ENCODE measurements at regions of chr12 and their contacts with region 1.

Region 1: DNA sequence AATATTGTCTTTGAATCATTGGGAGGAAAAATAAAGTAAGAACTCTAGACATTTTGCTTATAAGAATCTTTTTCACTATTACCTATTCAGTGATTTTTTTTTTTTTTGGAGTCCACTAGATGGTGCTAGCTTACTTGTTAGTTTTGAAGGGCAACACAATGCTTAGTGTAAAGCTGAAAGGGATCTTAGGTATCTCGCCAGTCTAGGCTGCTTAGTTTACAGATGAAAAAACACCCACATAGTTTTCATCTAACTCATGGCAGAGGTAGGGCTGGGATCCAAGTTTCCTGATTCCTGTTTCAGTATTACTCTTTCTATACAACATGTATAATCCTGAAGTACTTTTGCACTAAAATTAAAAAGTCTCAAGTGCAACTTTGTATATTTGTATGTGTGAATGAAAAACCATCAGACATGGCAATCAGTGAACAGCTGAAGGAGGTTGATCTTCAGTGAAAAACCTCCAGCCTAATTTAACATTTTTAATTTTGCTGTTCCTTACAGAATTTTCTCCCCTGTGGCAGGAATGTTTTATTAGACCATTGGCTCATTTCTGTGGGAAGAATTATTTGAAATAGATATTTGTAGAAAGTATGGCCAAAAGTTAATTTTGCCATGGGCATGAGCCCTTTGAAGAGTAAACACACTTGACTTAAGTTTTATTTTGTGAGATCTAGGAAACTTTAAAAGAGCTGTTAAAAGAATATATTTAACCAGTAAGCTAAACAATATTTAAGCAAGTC is 40.7 kb downstream of the LRRIQ1 start:
- DNase-seq: no peak
- H3K4me3 Mint-ChIP-seq: no peak overlapping the region
- H3K27ac Mint-ChIP-seq: no peak overlapping the region
- H3K4me1 Mint-ChIP-seq: no peaks in the 10 kb centered on the region
- H3K27me3 Mint-ChIP-seq: no peaks in the 10 kb centered on the region

Region 2: DNA sequence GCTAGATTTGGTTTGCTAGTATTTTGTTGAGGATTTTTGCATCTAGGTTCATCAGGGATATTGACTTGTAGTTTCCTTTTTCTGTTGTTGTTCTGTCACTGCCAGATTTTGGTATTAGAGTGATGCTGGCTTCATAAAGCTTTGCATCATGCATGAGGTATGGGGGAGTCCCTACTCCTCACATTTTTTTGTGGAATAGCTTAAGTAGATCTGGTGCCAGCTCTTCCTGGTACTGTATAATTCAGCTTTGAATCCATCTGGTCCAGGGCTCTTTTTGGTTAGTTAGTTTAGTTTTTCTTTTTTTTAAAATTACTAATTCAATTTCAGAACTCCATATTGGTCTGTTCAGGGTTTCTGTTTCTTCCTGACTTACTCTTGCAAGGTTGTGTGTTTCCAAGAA is 18.6 kb after region 1 on chr12:
- intact Hi-C with region 1: no loop called
- DNase-seq: no peak
- H3K4me3 Mint-ChIP-seq: no peak overlapping the region
- H3K27ac Mint-ChIP-seq: no peak overlapping the region
- H3K4me1 Mint-ChIP-seq: peaks cover 2% of the 10 kb centered on the region
- H3K27me3 Mint-ChIP-seq: no peaks in the 10 kb centered on the region

Region 3: DNA sequence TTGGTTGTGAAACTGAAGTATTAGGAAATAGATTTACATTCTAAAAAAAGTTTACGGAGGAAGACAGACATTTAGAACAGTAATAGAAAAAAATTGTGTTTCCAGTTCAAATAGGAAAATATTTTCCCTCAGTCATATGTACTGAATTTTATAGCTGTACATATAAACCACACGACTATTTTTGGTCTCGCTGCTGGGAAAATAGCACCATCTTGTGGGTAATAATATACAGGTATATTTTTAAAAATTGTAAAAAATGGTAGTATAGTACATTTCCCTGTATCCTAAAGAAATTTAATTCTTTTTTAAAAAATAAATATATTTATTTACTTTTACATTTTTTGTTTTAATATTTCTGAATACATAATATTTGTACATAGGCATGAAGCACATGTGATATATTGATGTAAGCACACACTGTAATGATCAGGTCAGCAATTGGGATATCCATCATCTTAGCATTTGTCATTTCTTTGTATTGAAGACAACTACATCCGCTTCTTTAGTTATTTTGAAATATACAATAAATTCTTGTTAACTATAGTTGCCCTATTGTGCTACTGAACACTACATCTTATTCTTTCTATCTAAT is 371.8 kb after region 1 on chr12:
- intact Hi-C with region 1: loop called (anchors 5 kb)
- DNase-seq: no peak
- H3K4me3 Mint-ChIP-seq: no peak overlapping the region
- H3K27ac Mint-ChIP-seq: no peak overlapping the region
- H3K4me1 Mint-ChIP-seq: no peaks in the 10 kb centered on the region
- H3K27me3 Mint-ChIP-seq: no peaks in the 10 kb centered on the region

Region 4: GRCh38 chr12:85872497-85873091 is 795.7 kb after region 1 on chr12:
- intact Hi-C with region 1: loop called (anchors 2 kb)
- DNase-seq: peak; percentile 59
- H3K4me3 Mint-ChIP-seq: no peak overlapping the region
- H3K27ac Mint-ChIP-seq: no peak overlapping the region
- H3K4me1 Mint-ChIP-seq: no peaks in the 10 kb centered on the region
- H3K27me3 Mint-ChIP-seq: no peaks in the 10 kb centered on the region